ENCODE measurements at regions of chr15 and their contacts with region 1.

Region 1: DNA sequence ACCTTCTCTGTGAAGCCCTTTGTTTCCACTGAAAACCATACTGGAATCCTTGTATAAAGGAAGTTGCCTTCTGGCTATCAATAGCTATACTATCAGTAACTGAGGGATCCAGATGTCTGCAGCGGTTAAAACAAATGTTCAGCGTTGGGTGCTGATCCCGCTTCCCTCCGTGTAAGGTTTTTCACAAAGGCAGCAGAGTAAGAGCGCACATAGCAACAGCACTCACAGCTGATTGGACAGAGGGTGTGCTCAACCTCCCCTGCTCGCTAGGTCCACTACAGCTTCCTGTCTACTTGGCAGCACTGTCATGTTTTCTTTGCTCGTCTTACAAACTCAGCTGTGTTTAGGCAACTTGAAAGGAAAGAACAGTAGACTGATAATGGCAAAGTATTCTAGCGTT is 27.3 kb downstream of the ATOSA start:
- DNase-seq: peak in 6 of 9 experiments; percentile 17 to 76 (median 52)
- ATAC-seq: peak; percentile 97
- H3K4me3 ChIP-seq: no peak overlapping the region
- H3K4me3 Mint-ChIP-seq: peak overlapping the region; percentile 11
- H3K27ac ChIP-seq: peak overlapping the region in 1 of 2 experiments; percentile 26
- H3K27ac Mint-ChIP-seq: no peak overlapping the region
- H3K4me1 ChIP-seq: no peaks in the 10 kb centered on the region
- H3K4me1 Mint-ChIP-seq: peaks cover 37% of the 10 kb centered on the region
- H3K27me3 ChIP-seq: no peaks in the 10 kb centered on the region
- H3K27me3 Mint-ChIP-seq: no peaks in the 10 kb centered on the region
- CTCF ChIP-seq: no peak

Region 2: DNA sequence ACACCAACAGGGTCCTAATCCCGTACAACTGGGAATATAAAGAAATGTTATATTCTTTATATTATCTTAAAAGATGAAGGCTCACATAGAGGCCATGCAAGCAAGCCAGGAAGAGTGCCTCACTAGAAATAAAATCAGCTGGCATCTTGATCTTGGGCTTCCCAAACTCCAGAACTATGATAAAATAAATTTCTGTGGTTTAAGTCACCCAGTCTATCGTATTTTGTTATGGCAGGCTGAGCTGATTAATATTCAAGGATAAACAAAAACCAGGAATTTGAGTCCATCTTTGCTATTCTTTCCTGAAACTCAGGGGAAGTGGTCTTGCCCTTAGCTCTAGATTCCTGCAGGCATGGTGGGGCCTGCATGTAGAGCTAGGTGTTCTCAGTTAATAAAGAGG is 15.4 kb before region 1 on chr15:
- CTCF ChIA-PET with region 1: no interaction called
- POLR2A ChIA-PET with region 1: interaction called, 3 read pairs
- intact Hi-C with region 1: loop called in 1 of 2 experiments (anchors 2 kb)
- DNase-seq: no peak
- ATAC-seq: no peak
- H3K4me3 ChIP-seq: no peak overlapping the region
- H3K4me3 Mint-ChIP-seq: no peak overlapping the region
- H3K27ac ChIP-seq: no peak overlapping the region
- H3K27ac Mint-ChIP-seq: no peak overlapping the region
- H3K4me1 ChIP-seq: no peaks in the 10 kb centered on the region
- H3K4me1 Mint-ChIP-seq: peaks cover 13% of the 10 kb centered on the region
- H3K27me3 ChIP-seq: no peaks in the 10 kb centered on the region
- H3K27me3 Mint-ChIP-seq: no peaks in the 10 kb centered on the region
- CTCF ChIP-seq: no peak

Measured in CD8-positive, alpha-beta T cell (primary cell).